ENCODE measurements at regions of chr12 and their contacts with region 1.

Region 1: GRCh38 chr12:10562306-10562933 is 51.0 kb downstream of the MAGOHB start:
- DNase-seq: no peak
- H3K4me3 ChIP-seq: no peak overlapping the region
- H3K27ac ChIP-seq: no peak overlapping the region
- H3K4me1 ChIP-seq: no peaks in the 10 kb centered on the region
- H3K27me3 ChIP-seq: no peaks in the 10 kb centered on the region
- CTCF ChIP-seq: peak; percentile 54 to 82 (median 65)
- POLR2A ChIP-seq: no peak

Region 2: DNA sequence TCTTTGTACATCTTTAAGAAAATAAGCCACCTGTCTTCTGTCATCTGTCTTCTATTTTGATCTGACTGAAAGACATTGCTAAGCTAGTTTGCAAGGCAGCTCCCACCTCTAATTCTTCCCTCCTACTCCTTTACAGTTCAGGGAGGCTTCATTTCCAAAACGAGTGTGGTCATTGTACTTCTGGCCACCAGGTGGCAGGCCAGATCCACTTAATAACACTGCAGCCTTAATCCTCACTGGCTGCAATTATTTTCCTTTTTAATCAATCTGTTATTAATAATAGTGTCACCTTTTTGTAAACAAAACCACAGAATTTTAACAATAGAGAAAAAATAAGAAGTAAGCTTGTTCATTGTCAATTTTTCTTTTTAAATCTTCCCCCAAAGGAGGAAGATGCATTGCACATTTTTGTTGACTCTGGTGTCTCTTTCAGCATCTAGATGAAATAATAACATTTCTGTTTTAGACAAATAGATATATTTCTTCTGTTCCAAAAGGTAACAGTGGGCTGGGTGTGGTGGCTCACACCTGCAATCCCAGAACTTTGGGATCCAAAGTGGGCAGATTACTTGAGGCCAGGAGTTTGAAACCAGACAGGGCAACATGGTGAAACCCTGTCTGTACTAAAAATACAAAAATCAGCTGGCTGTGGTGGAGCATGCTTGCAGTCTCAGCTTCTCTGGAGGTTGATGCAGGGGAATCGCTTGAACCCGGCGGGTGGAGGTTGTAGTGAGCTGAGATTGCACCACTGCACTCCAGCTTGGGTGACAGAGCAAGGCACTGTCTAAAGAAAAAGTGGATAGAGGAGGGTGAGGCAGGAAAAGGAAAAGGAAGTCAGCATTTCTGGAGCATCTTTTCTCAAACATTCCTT is 326.4 kb before region 1 on chr12:
- intact Hi-C with region 1: loop called (anchors 5 kb)
- DNase-seq: no peak
- H3K4me3 ChIP-seq: no peak overlapping the region
- H3K27ac ChIP-seq: no peak overlapping the region
- H3K4me1 ChIP-seq: no peaks in the 10 kb centered on the region
- H3K27me3 ChIP-seq: no peaks in the 10 kb centered on the region
- CTCF ChIP-seq: peak; percentile 56 to 94 (median 87)
- POLR2A ChIP-seq: no peak

Region 3: GRCh38 chr12:10331642-10332239 is 230.7 kb before region 1 on chr12:
- intact Hi-C with region 1: loop called (anchors 5 kb)
- DNase-seq: no peak
- H3K4me3 ChIP-seq: no peak overlapping the region
- H3K27ac ChIP-seq: no peak overlapping the region
- H3K4me1 ChIP-seq: no peaks in the 10 kb centered on the region
- H3K27me3 ChIP-seq: no peaks in the 10 kb centered on the region
- CTCF ChIP-seq: peak; percentile 23 to 77 (median 62)
- POLR2A ChIP-seq: no peak

Region 4: GRCh38 chr12:10721651-10722501 is 159.5 kb after region 1 on chr12:
- intact Hi-C with region 1: no loop called
- DNase-seq: peak; percentile 8
- H3K4me3 ChIP-seq: peak overlapping the region; percentile 70 to 97 (median 92)
- H3K27ac ChIP-seq: peak overlapping the region; percentile 98 to 100 (median 99)
- H3K4me1 ChIP-seq: peaks cover 11 to 65% (median 36%) of the 10 kb centered on the region in 3 donors
- H3K27me3 ChIP-seq: no peaks in the 10 kb centered on the region
- CTCF ChIP-seq: no peak
- POLR2A ChIP-seq: peak in 2 of 4 donors; percentile 5 to 30

Region 5: GRCh38 chr12:10749700-10750384 is 187.4 kb after region 1 on chr12:
- intact Hi-C with region 1: no loop called
- DNase-seq: no peak
- H3K4me3 ChIP-seq: peak overlapping the region in 3 of 4 donors; percentile 23 to 57 (median 26)
- H3K27ac ChIP-seq: peak overlapping the region; percentile 5 to 63 (median 34)
- H3K4me1 ChIP-seq: peaks cover 0 to 14% (median 0%) of the 10 kb centered on the region in 3 donors
- H3K27me3 ChIP-seq: peaks cover 0 to 5% (median 0%) of the 10 kb centered on the region in 4 donors
- CTCF ChIP-seq: peak; percentile 89 to 94 (median 92)
- POLR2A ChIP-seq: no peak

Measured in esophagus squamous epithelium (tissue), 5 donors.